Activated T-helper 1 cell treated with anti-CD3 and anti-CD28 coated beads, Interleukin-12 subunit alpha, Interleukin-12 subunit beta, Interleukin-2, Interleukin-4 antibody, amounts not matched to agents 30 ng/mL and 10 ng/mL and 1 ng/mL, durations not matched to agents 14 hours and 24 hours and 36 hours (primary cell): ENCODE measurements at regions of chr17 and their contacts with region 1.

Region 1: GRCh38 chr17:78133971-78134898 is 3.7 kb downstream of the TMC8 start:
- DNase-seq: peak; percentile 70
- H3K4me3 Mint-ChIP-seq: peak overlapping the region; percentile 86
- H3K27ac Mint-ChIP-seq: peak overlapping the region; percentile 85
- H3K4me1 Mint-ChIP-seq: peaks cover 69% of the 10 kb centered on the region
- H3K27me3 Mint-ChIP-seq: no peaks in the 10 kb centered on the region

Region 2: GRCh38 chr17:77444984-77445759 is 689.1 kb before region 1 on chr17:
- intact Hi-C with region 1: loop called (anchors 5 kb)
- DNase-seq: peak; percentile 80
- H3K4me3 Mint-ChIP-seq: peak overlapping the region; percentile 79
- H3K27ac Mint-ChIP-seq: peak overlapping the region; percentile 97
- H3K4me1 Mint-ChIP-seq: peaks cover 85% of the 10 kb centered on the region
- H3K27me3 Mint-ChIP-seq: no peaks in the 10 kb centered on the region

Region 3: GRCh38 chr17:78019367-78019975 is 114.8 kb before region 1 on chr17:
- intact Hi-C with region 1: loop called (anchors 2 kb)
- DNase-seq: no peak
- H3K4me3 Mint-ChIP-seq: no peak overlapping the region
- H3K27ac Mint-ChIP-seq: no peak overlapping the region
- H3K4me1 Mint-ChIP-seq: peaks cover 27% of the 10 kb centered on the region
- H3K27me3 Mint-ChIP-seq: no peaks in the 10 kb centered on the region

Region 4: GRCh38 chr17:78112518-78113226 is 21.6 kb before region 1 on chr17:
- intact Hi-C with region 1: loop called (anchors 1 kb)
- DNase-seq: peak; percentile 68
- H3K4me3 Mint-ChIP-seq: no peak overlapping the region
- H3K27ac Mint-ChIP-seq: peak overlapping the region; percentile 76
- H3K4me1 Mint-ChIP-seq: peaks cover 30% of the 10 kb centered on the region
- H3K27me3 Mint-ChIP-seq: no peaks in the 10 kb centered on the region

Region 5: DNA sequence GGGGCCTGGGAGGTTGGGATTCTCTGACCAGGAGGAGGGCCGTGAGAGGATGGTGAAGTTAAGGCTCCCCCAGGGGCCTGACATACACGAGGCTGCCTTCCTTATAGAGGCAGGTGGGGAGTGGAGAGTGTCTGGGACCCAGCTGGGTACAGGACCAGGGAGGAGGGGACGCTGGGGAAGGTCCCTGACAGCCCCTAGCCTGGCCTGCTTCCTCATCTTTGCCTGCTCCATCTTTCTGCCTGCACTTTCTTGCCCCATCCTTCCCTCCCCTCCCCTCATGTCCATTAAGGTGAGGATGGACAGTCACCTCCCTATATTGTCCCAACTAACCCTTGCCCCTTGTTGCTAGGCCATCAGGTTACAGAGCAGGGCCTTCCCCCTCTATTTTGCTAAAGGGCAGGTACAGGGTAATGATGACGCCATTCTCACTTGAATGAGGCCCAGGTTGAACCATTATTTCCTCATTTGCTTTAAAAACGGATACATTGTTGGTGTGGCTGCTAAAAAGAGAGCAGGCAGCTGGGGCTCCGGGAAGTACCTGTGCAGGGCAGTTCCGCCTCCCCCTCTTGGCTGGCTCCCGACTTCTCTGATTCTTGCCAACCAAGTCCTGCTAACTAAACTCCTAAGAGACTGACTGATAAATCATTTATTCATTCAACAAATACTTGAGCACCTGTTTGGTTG is 13.2 kb after region 1 on chr17:
- intact Hi-C with region 1: no loop called
- DNase-seq: no peak
- H3K4me3 Mint-ChIP-seq: no peak overlapping the region
- H3K27ac Mint-ChIP-seq: peak overlapping the region; percentile 34
- H3K4me1 Mint-ChIP-seq: peaks cover 13% of the 10 kb centered on the region
- H3K27me3 Mint-ChIP-seq: no peaks in the 10 kb centered on the region

Region 6: GRCh38 chr17:78206298-78206697 is 72.1 kb after region 1 on chr17:
- intact Hi-C with region 1: no loop called
- DNase-seq: no peak
- H3K4me3 Mint-ChIP-seq: no peak overlapping the region
- H3K27ac Mint-ChIP-seq: no peak overlapping the region
- H3K4me1 Mint-ChIP-seq: no peaks in the 10 kb centered on the region
- H3K27me3 Mint-ChIP-seq: peaks cover 2% of the 10 kb centered on the region